ENCODE measurements at regions of chr2 and their contacts with region 1.

Region 1: GRCh38 chr2:207754498-207755383 is 15.0 kb downstream of the FZD5 start:
- DNase-seq: no peak
- H3K4me3 Mint-ChIP-seq: no peak overlapping the region
- H3K27ac Mint-ChIP-seq: no peak overlapping the region
- H3K4me1 Mint-ChIP-seq: no peaks in the 10 kb centered on the region
- H3K27me3 Mint-ChIP-seq: no peaks in the 10 kb centered on the region
- CTCF ChIP-seq: no peak

Region 2: GRCh38 chr2:208033758-208034502 is 279.2 kb after region 1 on chr2:
- CTCF ChIA-PET with region 1: interaction called, 193 read pairs
- POLR2A ChIA-PET with region 1: no interaction called
- intact Hi-C with region 1: no loop called
- DNase-seq: peak; percentile 82
- H3K4me3 Mint-ChIP-seq: no peak overlapping the region
- H3K27ac Mint-ChIP-seq: no peak overlapping the region
- H3K4me1 Mint-ChIP-seq: no peaks in the 10 kb centered on the region
- H3K27me3 Mint-ChIP-seq: no peaks in the 10 kb centered on the region
- CTCF ChIP-seq: peak; percentile 24